CD8-positive, alpha-beta T cell (primary cell): ENCODE measurements at regions of chr5 and their contacts with region 1.

Region 1: DNA sequence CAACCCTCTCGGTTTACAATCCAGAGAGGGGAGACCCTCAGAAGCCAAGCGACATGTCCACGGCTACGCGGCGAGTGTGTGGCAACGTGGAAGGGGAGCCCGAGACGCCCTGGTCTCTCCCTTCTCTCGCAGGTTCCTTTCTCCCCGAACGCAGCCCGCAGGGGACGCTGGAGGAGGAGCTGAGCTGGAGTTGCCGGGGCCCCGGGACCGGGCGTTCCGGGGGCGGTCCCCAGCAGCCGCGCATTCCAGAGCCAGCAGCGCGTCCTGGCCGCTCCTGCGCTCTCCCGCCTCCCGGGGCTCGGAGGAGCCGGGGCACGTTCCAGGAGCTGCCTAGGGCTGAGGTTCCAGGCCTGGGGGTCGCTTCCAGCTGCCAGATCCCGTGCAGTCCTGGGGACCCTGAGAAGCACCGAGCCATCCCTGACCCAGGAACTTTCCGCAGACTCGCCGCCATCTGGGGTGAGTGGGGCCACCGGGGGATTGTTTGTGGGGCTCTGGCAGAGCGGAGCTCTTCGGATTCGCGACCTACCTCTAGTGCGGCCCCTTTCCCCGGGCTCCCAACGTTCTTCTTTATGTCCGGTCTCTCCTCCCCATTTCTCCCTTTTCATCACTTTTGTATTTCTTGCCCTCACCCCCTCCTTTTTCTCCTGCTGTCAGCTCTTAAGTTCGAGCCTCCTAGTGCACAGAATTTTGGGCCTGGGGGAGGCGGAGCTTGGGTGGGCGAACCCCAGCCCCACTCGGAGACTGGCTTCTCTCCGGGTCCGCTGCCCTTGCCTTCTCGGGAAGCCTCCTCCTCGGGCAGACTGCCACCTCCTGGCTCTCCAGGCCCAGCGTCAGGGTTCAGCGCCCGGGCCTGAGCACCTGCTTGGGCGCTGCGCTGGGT is at the start of gene SMIM3:
- DNase-seq: peak; percentile 39 to 80 (median 70)
- ATAC-seq: peak; percentile 58
- H3K4me3 ChIP-seq: peak within 1 kb of the TSS; percentile 70 to 88
- H3K4me3 Mint-ChIP-seq: peak within 1 kb of the TSS; percentile 96
- H3K27ac ChIP-seq: peak within 1 kb of the TSS; percentile 41 to 65
- H3K27ac Mint-ChIP-seq: peak within 1 kb of the TSS; percentile 91
- H3K4me1 ChIP-seq: peaks cover 33% of the 10 kb centered on the region
- H3K4me1 Mint-ChIP-seq: peaks cover 57% of the 10 kb centered on the region
- H3K27me3 ChIP-seq: no peaks in the 10 kb centered on the region
- H3K27me3 Mint-ChIP-seq: no peaks in the 10 kb centered on the region
- CTCF ChIP-seq: no peak
- total RNA-seq, gene SMIM3: 4.6 to 4.9 TPM

Region 2: DNA sequence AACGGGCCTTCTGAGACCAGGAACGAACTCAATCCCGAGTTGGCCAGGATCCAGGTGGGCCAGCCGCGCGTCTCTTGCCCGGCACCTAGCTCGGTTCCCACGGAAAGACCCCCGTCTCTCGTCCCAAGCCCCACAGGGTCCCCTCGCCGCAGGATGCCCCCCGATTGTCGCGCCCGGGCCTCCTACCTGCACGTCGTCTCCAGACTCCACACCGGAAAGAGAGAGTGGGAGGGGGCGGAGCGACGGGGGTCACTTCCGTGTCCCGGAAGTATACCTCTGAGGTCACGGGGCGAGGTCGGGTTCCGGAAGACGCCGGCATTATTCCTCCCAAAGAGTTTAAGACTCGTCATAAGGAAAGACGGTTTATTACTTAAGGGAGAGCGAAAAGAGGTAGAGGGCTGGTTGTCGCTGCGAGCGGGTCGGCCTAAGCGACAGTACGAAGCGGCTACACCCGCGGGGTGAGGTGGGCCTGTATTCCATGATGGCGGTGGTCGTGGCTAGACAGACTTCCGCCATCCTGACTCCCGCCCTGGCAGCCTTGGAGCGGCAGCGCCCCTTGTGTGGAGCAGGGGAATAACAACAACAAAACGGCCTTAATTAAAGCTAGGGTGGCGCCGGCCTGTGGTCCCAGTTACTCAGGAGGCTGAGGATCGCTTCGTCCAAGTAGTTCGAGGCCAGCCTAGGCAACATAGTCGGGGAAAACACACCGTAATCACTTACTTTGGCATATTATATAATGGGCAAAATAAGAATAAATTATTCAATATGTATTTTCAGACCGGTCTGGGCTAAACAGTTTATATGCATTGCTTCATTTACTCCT is 329.0 kb before region 1 on chr5 and contains the start of gene RPS14:
- CTCF ChIA-PET with region 1: no interaction called
- POLR2A ChIA-PET with region 1: no interaction called
- intact Hi-C with region 1: loop called in 1 of 2 experiments (anchors 5 kb)
- DNase-seq: peak; percentile 90 to 97 (median 95)
- ATAC-seq: peak; percentile 92
- H3K4me3 ChIP-seq: peak within 1 kb of the TSS; percentile 77 to 89
- H3K4me3 Mint-ChIP-seq: peak within 1 kb of the TSS; percentile 100
- H3K27ac ChIP-seq: peak within 1 kb of the TSS; percentile 93 to 98
- H3K27ac Mint-ChIP-seq: peak within 1 kb of the TSS; percentile 100
- H3K4me1 ChIP-seq: peaks cover 22% of the 10 kb centered on the region
- H3K4me1 Mint-ChIP-seq: peaks cover 36% of the 10 kb centered on the region
- H3K27me3 ChIP-seq: no peaks in the 10 kb centered on the region
- H3K27me3 Mint-ChIP-seq: no peaks in the 10 kb centered on the region
- CTCF ChIP-seq: peak; percentile 84
- total RNA-seq, gene RPS14: 5,604 to 5,613 TPM

Region 3: GRCh38 chr5:150560401-150561193 is 218.2 kb before region 1 on chr5:
- CTCF ChIA-PET with region 1: interaction called, 9 read pairs
- POLR2A ChIA-PET with region 1: no interaction called
- intact Hi-C with region 1: loop called (anchors 1 to 5 kb)
- DNase-seq: peak; percentile 68 to 93 (median 84)
- ATAC-seq: peak; percentile 97
- H3K4me3 ChIP-seq: no peak overlapping the region
- H3K4me3 Mint-ChIP-seq: no peak overlapping the region
- H3K27ac ChIP-seq: no peak overlapping the region
- H3K27ac Mint-ChIP-seq: no peak overlapping the region
- H3K4me1 ChIP-seq: no peaks in the 10 kb centered on the region
- H3K4me1 Mint-ChIP-seq: no peaks in the 10 kb centered on the region
- H3K27me3 ChIP-seq: no peaks in the 10 kb centered on the region
- H3K27me3 Mint-ChIP-seq: peaks cover 3% of the 10 kb centered on the region
- CTCF ChIP-seq: peak; percentile 92

Region 4: DNA sequence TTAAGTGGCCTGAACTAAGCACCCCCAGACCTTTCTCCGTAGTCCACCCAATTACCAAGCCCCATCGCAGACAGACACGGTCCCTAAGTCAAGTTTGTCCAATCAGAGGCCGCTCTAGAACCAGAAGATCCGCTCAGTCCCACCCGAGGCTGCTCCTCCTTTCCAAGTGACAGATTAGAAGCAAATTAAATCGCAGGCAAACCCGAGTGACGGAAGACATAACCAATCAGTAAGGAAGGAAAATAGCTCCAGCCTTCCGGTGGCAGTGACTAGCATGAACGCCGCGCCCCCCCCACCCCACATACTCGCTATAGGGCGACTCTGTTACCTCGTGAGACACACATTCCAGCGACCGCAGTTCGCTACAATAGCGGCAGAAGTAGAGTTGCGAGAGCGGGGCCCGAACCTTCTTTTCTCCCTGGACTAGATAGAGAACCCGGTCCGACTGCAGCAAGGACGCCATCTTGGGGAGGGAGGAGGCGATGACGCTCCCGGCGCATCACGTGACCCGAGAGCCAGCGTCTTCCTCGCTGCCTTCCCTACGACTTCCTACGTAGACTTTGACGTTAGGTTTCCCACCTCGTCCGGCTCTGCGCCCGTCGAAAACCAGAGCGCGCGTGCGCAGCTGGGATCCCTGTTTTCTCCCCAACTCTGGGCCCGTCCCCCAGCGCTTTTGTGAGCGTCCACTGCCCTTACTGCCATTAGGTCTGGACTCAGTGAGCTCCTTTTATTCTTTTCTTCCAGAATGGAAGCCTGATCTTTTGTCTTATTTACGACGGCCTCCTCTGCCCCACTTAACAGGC is 20.0 kb before region 1 on chr5 and contains the start of gene DCTN4:
- CTCF ChIA-PET with region 1: interaction called, 19 read pairs
- POLR2A ChIA-PET with region 1: interaction called, 22 read pairs
- intact Hi-C with region 1: loop called (anchors 1 kb)
- DNase-seq: peak; percentile 83 to 99 (median 93)
- ATAC-seq: peak; percentile 93
- H3K4me3 ChIP-seq: peak within 1 kb of the TSS; percentile 79 to 92
- H3K4me3 Mint-ChIP-seq: no peak within 1 kb of the TSS
- H3K27ac ChIP-seq: peak within 1 kb of the TSS; percentile 89 to 100
- H3K27ac Mint-ChIP-seq: no peak within 1 kb of the TSS
- H3K4me1 ChIP-seq: peaks cover 27% of the 10 kb centered on the region
- H3K4me1 Mint-ChIP-seq: peaks cover 39% of the 10 kb centered on the region
- H3K27me3 ChIP-seq: no peaks in the 10 kb centered on the region
- H3K27me3 Mint-ChIP-seq: peaks cover 2% of the 10 kb centered on the region
- CTCF ChIP-seq: no peak
- total RNA-seq, gene DCTN4: 117 to 121 TPM

Region 5: GRCh38 chr5:150801117-150801927 is 22.6 kb after region 1 on chr5:
- CTCF ChIA-PET with region 1: interaction called, 31 read pairs
- POLR2A ChIA-PET with region 1: interaction called, 3 read pairs
- intact Hi-C with region 1: no loop called
- DNase-seq: peak in 2 of 9 experiments; percentile 62 to 71
- ATAC-seq: peak; percentile 54
- H3K4me3 ChIP-seq: no peak overlapping the region
- H3K4me3 Mint-ChIP-seq: no peak overlapping the region
- H3K27ac ChIP-seq: no peak overlapping the region
- H3K27ac Mint-ChIP-seq: no peak overlapping the region
- H3K4me1 ChIP-seq: peaks cover 5% of the 10 kb centered on the region
- H3K4me1 Mint-ChIP-seq: peaks cover 4% of the 10 kb centered on the region
- H3K27me3 ChIP-seq: no peaks in the 10 kb centered on the region
- H3K27me3 Mint-ChIP-seq: peaks cover 4% of the 10 kb centered on the region
- CTCF ChIP-seq: peak; percentile 78

Region 6: DNA sequence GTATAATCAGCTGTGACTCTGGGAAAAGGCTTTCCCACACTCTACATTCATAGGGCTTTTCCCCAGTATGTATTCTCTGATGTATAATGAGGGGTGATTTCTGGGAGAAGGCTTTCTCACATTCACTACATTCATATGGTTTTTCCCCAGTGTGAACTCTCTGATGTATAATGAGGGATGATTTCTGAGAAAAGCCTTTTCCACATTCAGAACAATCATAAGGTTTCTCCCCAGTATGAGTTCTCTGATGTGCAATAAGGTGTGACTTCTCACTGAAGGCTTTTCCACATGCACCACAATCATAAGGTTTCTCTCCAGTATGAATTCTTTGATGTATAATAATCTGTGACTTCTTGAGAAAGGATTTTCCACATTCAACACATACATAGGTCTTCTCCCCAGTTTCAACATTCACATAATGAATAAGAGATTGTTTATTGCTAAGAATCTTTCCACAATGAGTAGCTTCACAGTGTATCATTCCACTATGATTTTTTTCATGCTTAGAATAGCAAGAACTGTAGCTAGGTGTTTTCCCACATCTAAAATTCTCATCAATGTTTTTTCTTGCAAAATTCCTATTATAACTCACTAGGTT is 152.7 kb after region 1 on chr5:
- CTCF ChIA-PET with region 1: no interaction called
- POLR2A ChIA-PET with region 1: no interaction called
- intact Hi-C with region 1: no loop called
- DNase-seq: no peak
- ATAC-seq: no peak
- H3K4me3 ChIP-seq: no peak overlapping the region
- H3K4me3 Mint-ChIP-seq: no peak overlapping the region
- H3K27ac ChIP-seq: no peak overlapping the region
- H3K27ac Mint-ChIP-seq: no peak overlapping the region
- H3K4me1 ChIP-seq: no peaks in the 10 kb centered on the region
- H3K4me1 Mint-ChIP-seq: no peaks in the 10 kb centered on the region
- H3K27me3 ChIP-seq: no peaks in the 10 kb centered on the region
- H3K27me3 Mint-ChIP-seq: no peaks in the 10 kb centered on the region
- CTCF ChIP-seq: no peak

Region 7: DNA sequence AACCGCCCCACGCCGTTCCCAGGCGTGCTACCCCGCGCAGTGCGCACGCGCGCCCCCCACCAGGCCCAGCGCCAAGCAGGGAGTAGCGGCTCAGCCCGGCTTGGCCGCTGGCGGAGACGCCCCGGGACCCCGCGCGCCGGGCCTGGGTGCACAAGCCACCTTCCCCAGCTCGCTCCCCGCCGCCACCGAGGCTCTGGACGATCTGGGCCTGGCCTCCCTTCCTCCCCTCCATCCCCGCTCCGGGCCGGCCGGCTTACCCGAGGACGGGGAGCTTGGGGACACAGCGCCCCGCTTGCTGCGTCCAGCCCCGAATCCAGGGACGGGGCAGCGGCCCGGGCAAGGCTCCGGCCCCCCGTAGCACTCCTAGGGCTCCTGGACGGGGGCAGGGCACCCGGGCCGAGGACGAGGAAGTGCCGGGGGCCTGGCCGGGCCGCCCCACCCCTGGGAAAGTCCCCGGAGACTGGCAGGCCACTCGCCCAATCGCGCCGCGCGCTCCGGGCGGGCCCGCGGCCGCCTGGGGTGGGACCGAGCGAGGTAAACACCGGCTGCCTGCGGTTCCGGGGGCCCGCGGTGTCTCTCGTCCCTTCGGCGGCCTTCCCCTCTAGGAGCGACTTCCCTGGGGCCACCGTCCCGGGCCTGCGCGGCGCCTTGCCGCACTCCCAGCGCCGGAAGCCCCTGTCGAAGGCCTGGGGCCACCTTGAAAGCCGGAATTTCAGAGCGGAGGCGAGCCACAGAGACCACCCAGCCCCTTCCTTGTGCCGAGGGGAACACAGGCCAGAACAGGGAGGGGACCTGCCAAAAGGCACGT is 302.1 kb after region 1 on chr5 and contains the start of gene TNIP1:
- CTCF ChIA-PET with region 1: no interaction called
- POLR2A ChIA-PET with region 1: no interaction called
- intact Hi-C with region 1: loop called in 1 of 2 experiments (anchors 5 kb)
- DNase-seq: peak; percentile 87 to 97 (median 94)
- ATAC-seq: peak; percentile 84
- H3K4me3 ChIP-seq: peak within 1 kb of the TSS; percentile 76
- H3K4me3 Mint-ChIP-seq: peak within 1 kb of the TSS; percentile 93
- H3K27ac ChIP-seq: peak within 1 kb of the TSS; percentile 70 to 98
- H3K27ac Mint-ChIP-seq: peak within 1 kb of the TSS; percentile 95
- H3K4me1 ChIP-seq: peaks cover 56% of the 10 kb centered on the region
- H3K4me1 Mint-ChIP-seq: peaks cover 80% of the 10 kb centered on the region
- H3K27me3 ChIP-seq: no peaks in the 10 kb centered on the region
- H3K27me3 Mint-ChIP-seq: no peaks in the 10 kb centered on the region
- CTCF ChIP-seq: no peak
- total RNA-seq, gene TNIP1: 133 to 134 TPM

Region 8: GRCh38 chr5:151213800-151214613 is 435.2 kb after region 1 on chr5:
- CTCF ChIA-PET with region 1: no interaction called
- POLR2A ChIA-PET with region 1: no interaction called
- intact Hi-C with region 1: loop called in 1 of 2 experiments (anchors 10 kb)
- DNase-seq: peak; percentile 67 to 95 (median 89)
- ATAC-seq: peak; percentile 80
- H3K4me3 ChIP-seq: peak overlapping the region; percentile 57 to 61
- H3K4me3 Mint-ChIP-seq: peak overlapping the region; percentile 83
- H3K27ac ChIP-seq: peak overlapping the region; percentile 70 to 86
- H3K27ac Mint-ChIP-seq: peak overlapping the region; percentile 96
- H3K4me1 ChIP-seq: peaks cover 91% of the 10 kb centered on the region
- H3K4me1 Mint-ChIP-seq: peaks cover 86% of the 10 kb centered on the region
- H3K27me3 ChIP-seq: no peaks in the 10 kb centered on the region
- H3K27me3 Mint-ChIP-seq: no peaks in the 10 kb centered on the region
- CTCF ChIP-seq: no peak